ENCODE measurements at regions of chr2 and their contacts with region 1.

Region 1: DNA sequence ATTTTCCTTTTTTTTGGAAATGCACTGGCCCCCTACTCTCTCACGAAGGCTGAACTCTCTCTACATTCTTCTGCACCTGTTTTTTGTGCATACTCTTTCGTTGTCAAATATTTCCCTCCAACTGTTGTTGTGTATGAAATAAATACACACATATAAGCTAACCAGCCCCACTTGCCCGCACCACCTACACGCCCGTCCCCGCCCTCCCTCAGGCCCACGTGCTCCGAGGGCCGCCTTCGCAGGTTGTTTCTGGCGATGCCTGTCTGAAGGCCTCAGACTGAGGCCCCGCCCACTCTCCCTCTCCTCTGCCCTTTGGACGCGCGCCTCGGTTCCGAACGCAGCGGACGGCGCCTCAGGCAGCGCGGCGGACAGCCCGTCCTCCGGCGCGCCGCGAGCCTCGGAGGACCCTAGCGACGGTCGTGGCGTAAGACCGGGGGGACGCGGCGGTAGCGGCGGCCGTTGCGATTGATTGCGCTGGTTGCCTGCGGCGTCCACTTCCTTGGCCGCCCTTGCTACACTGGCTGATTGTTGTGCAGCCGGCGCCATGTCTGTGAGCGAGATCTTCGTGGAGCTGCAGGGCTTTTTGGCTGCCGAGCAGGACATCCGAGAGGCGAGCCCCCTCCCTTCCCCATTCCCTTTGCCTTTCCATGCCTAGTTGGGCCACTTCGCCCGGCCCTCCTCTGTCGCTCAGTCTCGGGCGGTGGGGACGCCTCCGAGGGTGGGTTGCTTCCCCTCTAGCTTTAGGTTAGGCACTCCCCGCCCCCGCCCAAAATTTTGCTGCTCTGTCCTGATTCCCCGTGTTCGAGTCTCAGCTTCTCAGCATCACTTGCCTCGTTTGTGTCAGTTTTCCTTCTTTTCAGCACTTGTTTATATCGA is at the start of gene TSN:
- DNase-seq: peak; percentile 98
- H3K4me3 Mint-ChIP-seq: peak within 1 kb of the TSS; percentile 79
- H3K27ac Mint-ChIP-seq: peak within 1 kb of the TSS; percentile 91
- H3K4me1 Mint-ChIP-seq: peaks cover 6% of the 10 kb centered on the region
- H3K27me3 Mint-ChIP-seq: no peaks in the 10 kb centered on the region
- CTCF ChIP-seq: no peak
- total RNA-seq, gene TSN: 60.7 and 78.2 TPM in 2 replicates

Region 2: GRCh38 chr2:121303531-121304263 is 451.8 kb before region 1 on chr2:
- CTCF ChIA-PET with region 1: no interaction called
- POLR2A ChIA-PET with region 1: no interaction called
- intact Hi-C with region 1: no loop called
- DNase-seq: peak; percentile 75
- H3K4me3 Mint-ChIP-seq: no peak overlapping the region
- H3K27ac Mint-ChIP-seq: no peak overlapping the region
- H3K4me1 Mint-ChIP-seq: peaks cover 14% of the 10 kb centered on the region
- H3K27me3 Mint-ChIP-seq: peaks cover 23% of the 10 kb centered on the region
- CTCF ChIP-seq: no peak

Region 3: DNA sequence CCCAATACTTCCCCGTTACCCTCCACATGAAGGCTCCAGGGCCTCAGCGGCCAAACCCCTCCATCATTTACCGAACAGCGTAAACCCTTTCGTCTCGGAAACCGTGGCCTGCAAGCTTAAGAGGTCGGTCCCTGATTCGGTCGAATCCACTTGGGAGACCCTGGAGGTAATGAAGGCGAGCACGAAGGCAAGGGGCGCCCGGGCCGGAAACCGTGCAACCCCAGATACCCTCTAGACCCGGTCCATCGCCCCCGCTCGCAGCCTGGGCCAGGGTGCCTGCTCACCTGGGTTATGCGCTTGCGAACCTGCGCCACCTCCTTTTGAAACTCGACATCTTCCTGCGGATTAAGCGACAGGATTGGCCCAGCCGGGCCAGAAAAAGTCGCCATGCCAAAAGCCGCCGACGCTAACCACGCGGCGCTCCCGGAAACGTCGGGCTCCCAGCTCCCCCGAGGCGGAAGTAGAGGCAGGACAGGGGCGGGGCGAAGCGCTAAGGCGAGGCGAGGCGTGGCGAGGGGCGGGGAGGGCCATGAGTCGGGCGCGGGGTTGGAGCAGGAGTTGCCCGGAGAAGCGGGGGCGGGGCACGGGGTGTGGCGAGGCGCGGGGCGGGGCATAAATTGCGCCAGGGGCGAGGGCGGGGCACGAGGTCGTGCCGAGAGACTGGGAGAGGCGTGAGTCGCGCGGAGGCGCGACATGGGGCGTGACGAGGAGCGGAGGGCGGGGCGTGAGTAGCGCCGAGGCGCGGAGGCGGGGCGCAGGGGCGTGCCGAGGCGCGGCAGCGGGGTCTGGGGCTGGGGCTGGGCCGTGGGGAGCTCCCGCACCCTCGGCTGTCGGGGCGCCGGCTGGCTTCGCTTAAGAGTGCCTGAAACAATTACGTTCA is 18.8 kb before region 1 on chr2 and contains the start of gene NIFK:
- CTCF ChIA-PET with region 1: interaction called, 10 read pairs
- POLR2A ChIA-PET with region 1: interaction called, 42 read pairs
- intact Hi-C with region 1: no loop called
- DNase-seq: peak; percentile 98
- H3K4me3 Mint-ChIP-seq: peak within 1 kb of the TSS; percentile 95
- H3K27ac Mint-ChIP-seq: peak within 1 kb of the TSS; percentile 90
- H3K4me1 Mint-ChIP-seq: peaks cover 7% of the 10 kb centered on the region
- H3K27me3 Mint-ChIP-seq: no peaks in the 10 kb centered on the region
- CTCF ChIP-seq: no peak
- total RNA-seq, gene NIFK: 111 and 171 TPM in 2 replicates

Region 4: GRCh38 chr2:121810959-121811853 is 55.7 kb after region 1 on chr2:
- CTCF ChIA-PET with region 1: no interaction called
- POLR2A ChIA-PET with region 1: no interaction called
- intact Hi-C with region 1: no loop called
- DNase-seq: peak; percentile 74
- H3K4me3 Mint-ChIP-seq: no peak overlapping the region
- H3K27ac Mint-ChIP-seq: no peak overlapping the region
- H3K4me1 Mint-ChIP-seq: peaks cover 5% of the 10 kb centered on the region
- H3K27me3 Mint-ChIP-seq: no peaks in the 10 kb centered on the region
- CTCF ChIP-seq: peak; percentile 66